Naive thymus-derived CD4-positive, alpha-beta T cell (primary cell): ENCODE measurements at regions of chr21 and their contacts with region 1.

Region 1: DNA sequence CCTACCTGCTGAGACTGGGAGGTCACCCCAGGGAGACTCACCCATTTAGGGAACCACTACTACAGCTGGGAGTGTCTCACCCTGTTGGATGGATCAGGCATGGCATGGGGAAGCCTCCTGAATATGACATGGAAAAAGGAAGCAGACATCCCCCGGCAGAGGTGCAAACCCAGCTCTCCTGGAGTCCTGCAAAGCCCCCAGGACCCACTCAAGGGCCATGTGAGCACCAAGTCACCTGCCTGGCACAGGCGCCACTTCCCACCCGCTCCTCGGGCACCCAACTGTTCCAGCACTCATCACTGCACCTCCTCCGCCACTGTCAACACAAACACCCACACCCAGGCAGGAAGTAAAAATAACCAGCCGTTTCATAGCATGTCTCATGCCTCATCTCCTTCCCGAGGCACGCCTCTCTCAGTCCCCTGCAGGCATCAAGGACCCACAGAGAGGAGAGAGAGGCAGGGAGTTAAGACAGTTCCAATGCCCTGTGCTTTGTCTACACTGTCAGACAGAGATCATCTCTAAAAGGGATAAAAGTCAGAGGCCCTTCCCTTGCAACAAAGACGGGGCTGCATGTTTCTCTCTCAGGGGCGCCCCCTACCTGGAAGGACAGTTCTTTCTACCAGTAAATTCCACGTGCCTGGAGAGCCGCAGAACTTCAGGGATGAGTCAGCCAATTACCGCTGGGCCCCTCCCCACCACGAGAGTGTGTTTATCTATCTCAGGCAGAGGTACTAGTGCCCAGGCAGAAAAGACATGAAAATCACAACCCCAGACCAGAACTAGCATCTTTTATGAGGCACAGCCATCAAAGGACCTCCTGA is 150.1 kb upstream of the SOD1 start:
- DNase-seq: peak; percentile 24 to 81 (median 54)
- ATAC-seq: peak; percentile 66
- H3K4me3 ChIP-seq: no peak overlapping the region
- H3K4me3 Mint-ChIP-seq: peak overlapping the region in 8 of 10 donors; percentile 32 to 79 (median 60)
- H3K27ac ChIP-seq: no peak overlapping the region
- H3K27ac Mint-ChIP-seq: peak overlapping the region in 7 of 9 donors; percentile 7 to 83 (median 78)
- H3K4me1 ChIP-seq: peaks cover 6 to 16% of the 10 kb centered on the region in 2 donors
- H3K4me1 Mint-ChIP-seq: peaks cover 14 to 47% (median 34%) of the 10 kb centered on the region in 7 donors
- H3K27me3 ChIP-seq: no peaks in the 10 kb centered on the region
- H3K27me3 Mint-ChIP-seq: peaks cover 0 to 57% (median 0%) of the 10 kb centered on the region in 5 donors

Region 2: DNA sequence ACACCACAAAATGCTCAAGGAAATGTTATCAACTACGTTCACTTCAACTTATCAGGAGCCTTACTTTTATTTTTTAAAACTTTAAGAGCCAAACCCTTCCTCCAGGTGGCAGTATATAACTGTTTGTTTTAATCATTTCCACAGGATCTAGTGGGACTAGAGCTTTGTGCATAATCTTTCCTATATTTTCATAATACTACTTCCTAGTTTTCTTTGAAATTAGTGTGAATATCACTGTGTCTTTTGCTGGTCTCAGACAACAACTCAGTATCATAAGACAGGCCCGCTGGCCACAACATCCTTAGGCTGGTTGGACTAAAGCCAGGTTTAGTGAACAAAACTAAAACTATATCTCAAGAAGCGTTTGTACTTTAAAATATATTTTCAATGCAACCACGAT is 310.8 kb before region 1 on chr21:
- CTCF ChIA-PET with region 1: no interaction called
- POLR2A ChIA-PET with region 1: no interaction called
- intact Hi-C with region 1: loop called (anchors 2 to 5 kb)
- DNase-seq: peak in 5 of 9 donors; percentile 51 to 63 (median 58)
- ATAC-seq: peak; percentile 74
- H3K4me3 ChIP-seq: no peak overlapping the region
- H3K4me3 Mint-ChIP-seq: peak overlapping the region in 3 of 10 donors; percentile 11 to 40 (median 13)
- H3K27ac ChIP-seq: no peak overlapping the region
- H3K27ac Mint-ChIP-seq: no peak overlapping the region
- H3K4me1 ChIP-seq: no peaks in the 10 kb centered on the region
- H3K4me1 Mint-ChIP-seq: peaks cover 14 to 42% (median 36%) of the 10 kb centered on the region in 7 donors
- H3K27me3 ChIP-seq: no peaks in the 10 kb centered on the region
- H3K27me3 Mint-ChIP-seq: no peaks in the 10 kb centered on the region

Region 3: DNA sequence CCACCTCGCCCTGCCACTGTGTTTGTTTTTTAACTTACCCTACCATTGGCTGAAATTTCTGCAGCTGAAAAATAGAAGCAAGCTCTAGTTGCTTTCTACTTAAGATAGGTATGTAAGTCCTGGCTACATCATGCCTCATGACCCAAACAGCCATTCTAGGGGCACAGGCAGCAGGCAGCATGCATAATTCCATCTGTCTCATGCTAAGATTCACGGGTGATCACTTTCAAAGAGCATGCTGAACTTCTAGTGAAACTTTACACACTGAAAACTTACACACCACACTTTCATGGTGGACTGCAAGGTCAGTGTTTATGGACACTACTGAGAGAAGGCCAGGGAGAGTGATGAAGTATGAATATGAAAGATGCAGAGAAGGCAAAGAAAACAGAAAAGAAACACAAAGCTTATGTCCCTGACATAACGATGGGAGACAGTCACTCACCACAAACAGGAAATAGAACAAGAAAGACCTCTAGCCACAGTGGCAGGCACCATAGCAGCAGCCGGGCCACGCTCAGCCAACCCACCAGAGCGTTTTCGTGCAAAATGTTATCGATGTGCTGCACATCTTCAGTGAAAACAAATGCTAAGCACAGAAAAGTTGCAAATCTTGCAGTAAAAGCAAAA is 63.1 kb before region 1 on chr21:
- CTCF ChIA-PET with region 1: no interaction called
- POLR2A ChIA-PET with region 1: no interaction called
- intact Hi-C with region 1: loop called in 1 of 2 experiments (anchors 1 kb)
- DNase-seq: peak in 7 of 9 donors; percentile 12 to 66 (median 55)
- ATAC-seq: peak; percentile 86
- H3K4me3 ChIP-seq: peak overlapping the region; percentile 38
- H3K4me3 Mint-ChIP-seq: peak overlapping the region; percentile 38 to 86 (median 74)
- H3K27ac ChIP-seq: no peak overlapping the region
- H3K27ac Mint-ChIP-seq: peak overlapping the region; percentile 4 to 92 (median 33)
- H3K4me1 ChIP-seq: peaks cover 14 to 22% of the 10 kb centered on the region in 2 donors
- H3K4me1 Mint-ChIP-seq: peaks cover 26 to 58% (median 41%) of the 10 kb centered on the region in 7 donors
- H3K27me3 ChIP-seq: no peaks in the 10 kb centered on the region
- H3K27me3 Mint-ChIP-seq: peaks cover 0 to 7% (median 0%) of the 10 kb centered on the region in 5 donors